CD4-positive, alpha-beta memory T cell (primary cell): ENCODE measurements at regions of chr3 and their contacts with region 1.

Region 1: GRCh38 chr3:42012935-42013690 is 51.2 kb upstream of the ULK4 start:
- DNase-seq: peak; percentile 64 to 70 (median 66)
- H3K4me3 ChIP-seq: peak overlapping the region; percentile 50 to 85
- H3K4me3 Mint-ChIP-seq: peak overlapping the region; percentile 87 to 96 (median 92)
- H3K27ac ChIP-seq: peak overlapping the region; percentile 63
- H3K27ac Mint-ChIP-seq: peak overlapping the region; percentile 95 to 98 (median 97)
- H3K4me1 ChIP-seq: peaks cover 32% of the 10 kb centered on the region
- H3K4me1 Mint-ChIP-seq: peaks cover 24 to 45% (median 36%) of the 10 kb centered on the region in 4 donors
- H3K27me3 ChIP-seq: no peaks in the 10 kb centered on the region
- H3K27me3 Mint-ChIP-seq: no peaks in the 10 kb centered on the region

Region 2: GRCh38 chr3:41955192-41955591 is 57.9 kb before region 1 on chr3:
- CTCF ChIA-PET with region 1: no interaction called
- POLR2A ChIA-PET with region 1: no interaction called
- intact Hi-C with region 1: no loop called
- DNase-seq: no peak
- H3K4me3 ChIP-seq: no peak overlapping the region
- H3K4me3 Mint-ChIP-seq: no peak overlapping the region
- H3K27ac ChIP-seq: no peak overlapping the region
- H3K27ac Mint-ChIP-seq: no peak overlapping the region
- H3K4me1 ChIP-seq: no peaks in the 10 kb centered on the region
- H3K4me1 Mint-ChIP-seq: peaks cover 0 to 17% (median 11%) of the 10 kb centered on the region in 4 donors
- H3K27me3 ChIP-seq: no peaks in the 10 kb centered on the region
- H3K27me3 Mint-ChIP-seq: no peaks in the 10 kb centered on the region

Region 3: DNA sequence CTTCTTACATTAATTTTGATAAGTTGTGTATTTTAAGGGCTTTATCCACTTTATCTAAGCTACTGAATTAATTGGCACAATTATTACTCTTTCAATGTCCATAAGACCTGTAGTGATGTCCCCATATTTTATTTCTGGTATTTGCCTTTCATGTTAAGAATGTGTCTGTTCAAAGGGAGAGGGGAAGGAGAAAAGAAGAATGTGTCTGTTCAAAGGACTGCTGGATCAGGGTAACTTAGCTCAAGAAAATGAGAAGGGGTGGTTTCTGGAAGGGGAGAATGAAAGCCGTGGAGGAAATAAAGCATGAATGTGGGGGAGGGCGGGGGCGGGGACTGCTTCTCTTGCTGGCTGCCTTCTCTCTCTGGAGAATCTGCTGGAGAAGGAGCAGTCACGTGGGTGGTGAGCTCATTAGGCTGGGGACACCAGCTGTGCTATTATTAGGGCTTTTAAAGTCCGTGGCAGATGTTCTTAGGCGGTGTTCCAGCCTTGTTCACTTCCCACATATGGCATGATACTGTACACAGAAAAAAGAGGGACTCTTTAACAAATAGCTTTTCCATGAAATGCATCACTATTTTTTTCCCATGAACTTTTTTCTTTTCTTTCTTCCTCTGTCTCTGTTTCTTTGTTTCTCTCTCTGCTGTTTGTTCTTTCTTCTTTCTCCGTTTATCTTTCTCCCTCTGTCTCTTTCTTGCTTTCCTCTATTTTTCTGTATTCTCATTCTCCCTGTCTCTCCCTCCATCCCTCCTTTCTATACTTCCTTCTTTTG is 12.4 kb after region 1 on chr3:
- CTCF ChIA-PET with region 1: interaction called, 3 read pairs
- POLR2A ChIA-PET with region 1: interaction called, 10 read pairs
- intact Hi-C with region 1: no loop called
- DNase-seq: no peak
- H3K4me3 ChIP-seq: no peak overlapping the region
- H3K4me3 Mint-ChIP-seq: peak overlapping the region in 4 of 8 donors; percentile 4 to 31 (median 17)
- H3K27ac ChIP-seq: no peak overlapping the region
- H3K27ac Mint-ChIP-seq: peak overlapping the region in 4 of 7 donors; percentile 25 to 69 (median 60)
- H3K4me1 ChIP-seq: peaks cover 33% of the 10 kb centered on the region
- H3K4me1 Mint-ChIP-seq: peaks cover 36 to 66% (median 50%) of the 10 kb centered on the region in 4 donors
- H3K27me3 ChIP-seq: no peaks in the 10 kb centered on the region
- H3K27me3 Mint-ChIP-seq: no peaks in the 10 kb centered on the region

Region 4: GRCh38 chr3:42080452-42080891 is 67.4 kb after region 1 on chr3:
- CTCF ChIA-PET with region 1: interaction called, 5 read pairs
- POLR2A ChIA-PET with region 1: interaction called, 4 read pairs
- intact Hi-C with region 1: loop called (anchors 2 kb)
- DNase-seq: peak in 4 of 5 donors; percentile 13 to 64 (median 30)
- H3K4me3 ChIP-seq: no peak overlapping the region
- H3K4me3 Mint-ChIP-seq: peak overlapping the region in 5 of 8 donors; percentile 47 to 83 (median 62)
- H3K27ac ChIP-seq: peak overlapping the region; percentile 53
- H3K27ac Mint-ChIP-seq: peak overlapping the region; percentile 62 to 95 (median 91)
- H3K4me1 ChIP-seq: peaks cover 48% of the 10 kb centered on the region
- H3K4me1 Mint-ChIP-seq: peaks cover 42 to 68% (median 52%) of the 10 kb centered on the region in 4 donors
- H3K27me3 ChIP-seq: no peaks in the 10 kb centered on the region
- H3K27me3 Mint-ChIP-seq: no peaks in the 10 kb centered on the region

Region 5: DNA sequence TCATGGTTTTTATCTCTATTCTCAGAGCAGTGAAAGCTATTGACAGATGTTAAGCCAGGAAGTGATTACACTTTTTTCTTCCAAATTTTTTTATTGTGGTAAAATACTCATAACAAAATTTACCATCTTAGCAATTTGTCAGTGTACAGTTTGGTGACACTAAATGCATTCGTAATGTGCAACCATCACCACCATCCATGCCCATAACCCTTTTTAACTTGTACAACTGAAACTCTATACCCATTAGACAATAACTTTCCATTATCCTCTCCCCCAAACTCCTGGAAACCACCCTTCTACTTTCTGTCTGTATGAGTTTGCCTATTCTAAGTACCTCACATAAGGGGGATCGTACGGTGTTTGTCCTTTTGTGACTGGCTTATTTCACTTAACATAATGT is 1107.8 kb after region 1 on chr3:
- CTCF ChIA-PET with region 1: no interaction called
- POLR2A ChIA-PET with region 1: no interaction called
- intact Hi-C with region 1: no loop called
- DNase-seq: no peak
- H3K4me3 ChIP-seq: no peak overlapping the region
- H3K4me3 Mint-ChIP-seq: no peak overlapping the region
- H3K27ac ChIP-seq: no peak overlapping the region
- H3K27ac Mint-ChIP-seq: no peak overlapping the region
- H3K4me1 ChIP-seq: no peaks in the 10 kb centered on the region
- H3K4me1 Mint-ChIP-seq: peaks cover 0 to 6% (median 0%) of the 10 kb centered on the region in 4 donors
- H3K27me3 ChIP-seq: no peaks in the 10 kb centered on the region
- H3K27me3 Mint-ChIP-seq: peaks cover 10 to 16% of the 10 kb centered on the region in 2 donors